ENCODE measurements at regions of chr7 and their contacts with region 1.

Region 1: GRCh38 chr7:106176414-106177299 is 64.5 kb upstream of the SYPL1 start:
- DNase-seq: peak; percentile 80 to 84
- ATAC-seq: peak; percentile 84 to 94 (median 91)
- H3K4me3 ChIP-seq: no peak overlapping the region
- H3K27ac ChIP-seq: peak overlapping the region in 6 of 10 donors; percentile 11 to 73 (median 38)
- H3K4me1 ChIP-seq: peaks cover 3 to 41% (median 18%) of the 10 kb centered on the region in 9 donors
- H3K27me3 ChIP-seq: peaks cover 0 to 10% (median 0%) of the 10 kb centered on the region in 7 donors
- CTCF ChIP-seq: peak; percentile 87 to 99 (median 95)

Region 2: DNA sequence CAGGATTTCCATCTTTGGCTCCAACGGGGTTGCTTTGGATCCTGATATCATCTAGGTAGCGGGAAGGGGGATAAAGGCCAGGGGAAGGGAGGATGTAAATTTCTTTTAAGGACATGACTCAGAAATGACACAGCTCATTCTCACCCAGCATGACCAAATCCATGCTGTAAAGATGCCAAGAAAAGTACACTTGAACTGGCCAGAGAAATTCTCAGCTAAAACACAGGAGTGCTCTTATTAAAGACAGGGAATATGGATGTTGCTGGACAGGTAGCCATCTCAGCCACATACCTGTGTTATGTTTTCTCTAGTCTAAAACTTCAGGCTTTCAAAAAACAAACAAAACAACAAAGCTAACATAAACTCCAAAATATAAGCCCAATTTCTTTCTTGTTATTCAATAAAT is 39.9 kb after region 1 on chr7:
- intact Hi-C with region 1: loop called in 3 of 10 experiments (anchors 2 to 5 kb)
- DNase-seq: peak in 1 of 2 donors; percentile 51
- ATAC-seq: peak; percentile 66 to 93 (median 92)
- H3K4me3 ChIP-seq: peak overlapping the region in 5 of 10 donors; percentile 1 to 34 (median 24)
- H3K27ac ChIP-seq: peak overlapping the region; percentile 72 to 93 (median 84)
- H3K4me1 ChIP-seq: peaks cover 18 to 39% (median 36%) of the 10 kb centered on the region in 9 donors
- H3K27me3 ChIP-seq: no peaks in the 10 kb centered on the region
- CTCF ChIP-seq: no peak

Region 3: DNA sequence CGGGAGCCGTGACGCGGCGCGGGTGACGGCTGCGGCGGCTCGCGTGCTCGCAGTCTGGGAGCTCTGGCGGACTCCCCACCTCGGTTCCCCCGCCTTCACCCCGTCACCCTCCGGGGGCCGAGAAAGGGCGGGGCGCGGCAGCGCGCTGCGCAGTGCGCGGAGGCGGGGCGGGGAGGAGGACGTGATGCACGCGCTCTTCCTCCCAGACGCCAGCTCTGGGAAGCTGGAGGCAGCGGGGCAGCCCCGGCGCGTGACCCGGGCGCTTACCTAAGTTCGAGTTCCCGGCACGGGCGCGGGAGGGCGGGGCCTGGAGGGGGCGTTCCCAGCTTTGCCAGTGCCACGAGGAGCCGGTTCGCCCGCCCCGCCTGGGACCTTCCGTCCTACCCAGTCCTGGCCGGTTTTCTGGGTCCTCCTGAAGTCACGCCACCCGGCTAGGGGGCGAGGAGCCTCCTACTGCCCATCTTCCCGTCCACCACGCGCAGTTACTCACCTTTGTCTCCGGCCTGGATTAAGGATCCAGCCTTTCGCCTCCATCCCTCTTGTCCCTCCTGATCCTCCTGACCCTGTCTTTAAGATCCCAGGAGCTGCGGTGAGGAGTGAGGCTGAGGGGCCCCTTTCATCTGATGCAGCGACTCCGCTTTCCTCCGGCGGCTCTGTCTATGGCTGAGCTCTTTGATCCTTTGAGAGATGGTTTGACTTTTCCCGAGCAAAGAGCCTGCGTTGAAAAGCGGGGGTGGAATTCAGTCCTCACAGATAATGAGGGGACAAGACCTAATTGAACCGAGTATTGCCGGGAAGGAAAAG is 108.6 kb after region 1 on chr7:
- intact Hi-C with region 1: loop called in 6 of 10 experiments (anchors 2 to 5 kb)
- DNase-seq: peak; percentile 96 to 97
- ATAC-seq: peak; percentile 95 to 99 (median 96)
- H3K4me3 ChIP-seq: peak overlapping the region; percentile 60 to 80 (median 75)
- H3K27ac ChIP-seq: peak overlapping the region; percentile 86 to 99 (median 96)
- H3K4me1 ChIP-seq: peaks cover 0 to 44% (median 25%) of the 10 kb centered on the region in 9 donors
- H3K27me3 ChIP-seq: no peaks in the 10 kb centered on the region
- CTCF ChIP-seq: peak in 1 of 9 donors; percentile 24

Region 4: GRCh38 chr7:106371629-106372028 is 195.0 kb after region 1 on chr7:
- intact Hi-C with region 1: loop called in 1 of 10 experiments (anchors 10 kb)
- DNase-seq: no peak
- ATAC-seq: peak in 3 of 8 donors; percentile 13 to 50 (median 48)
- H3K4me3 ChIP-seq: no peak overlapping the region
- H3K27ac ChIP-seq: peak overlapping the region in 1 of 10 donors; percentile 46
- H3K4me1 ChIP-seq: peaks cover 0 to 13% (median 0%) of the 10 kb centered on the region in 9 donors
- H3K27me3 ChIP-seq: no peaks in the 10 kb centered on the region
- CTCF ChIP-seq: no peak

Region 5: DNA sequence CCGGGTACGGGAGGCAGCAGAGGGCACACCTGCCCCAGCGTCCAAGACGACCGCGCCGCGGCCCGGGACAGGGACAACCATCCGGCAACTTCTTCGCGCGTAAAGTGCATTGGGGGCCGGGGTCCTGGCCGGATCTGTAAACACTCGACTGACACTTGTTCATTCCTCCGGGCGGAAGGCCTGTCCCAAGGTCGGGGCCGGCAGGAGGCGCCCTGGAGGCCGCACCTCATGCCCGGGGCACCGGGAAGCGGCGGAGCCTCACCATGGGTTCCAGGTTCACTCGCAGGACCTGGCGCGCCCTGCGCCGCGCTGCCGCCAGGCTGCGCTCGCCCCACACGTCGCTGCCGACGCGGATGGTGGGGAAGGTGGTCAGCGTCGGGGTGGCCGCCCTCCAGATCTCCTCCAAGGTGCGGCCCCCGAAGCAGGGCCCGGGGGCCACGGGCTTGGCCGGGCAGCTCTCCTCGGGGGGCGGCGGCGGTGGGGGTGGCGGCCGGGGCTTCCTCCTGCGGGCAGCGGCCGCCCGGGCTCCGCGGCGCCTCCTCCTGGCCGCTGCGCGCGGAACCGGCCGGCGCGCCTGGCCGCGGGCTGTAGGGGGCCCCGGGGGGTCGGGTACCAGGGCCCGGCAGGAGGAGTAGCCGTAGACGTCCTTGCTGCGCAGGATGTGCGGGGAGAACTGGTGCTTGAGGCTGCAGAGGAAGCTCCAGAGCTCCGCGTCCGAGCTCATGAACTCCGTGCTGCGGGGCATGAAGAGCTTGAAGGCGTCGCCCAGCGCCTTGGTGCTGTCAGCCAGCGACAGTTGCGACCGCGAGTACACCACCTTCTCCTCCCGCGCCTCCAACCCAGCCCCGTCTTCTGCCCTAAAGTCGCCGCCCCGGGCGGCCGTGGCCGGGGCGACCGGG is 483.6 kb after region 1 on chr7:
- intact Hi-C with region 1: loop called in 3 of 10 experiments (anchors 2 to 5 kb)
- DNase-seq: peak; percentile 61 to 78
- ATAC-seq: peak; percentile 59 to 80 (median 68)
- H3K4me3 ChIP-seq: peak overlapping the region; percentile 69 to 95 (median 82)
- H3K27ac ChIP-seq: peak overlapping the region; percentile 86 to 98 (median 94)
- H3K4me1 ChIP-seq: peaks cover 0 to 35% (median 27%) of the 10 kb centered on the region in 9 donors
- H3K27me3 ChIP-seq: no peaks in the 10 kb centered on the region
- CTCF ChIP-seq: peak; percentile 61 to 84 (median 72)

Region 6: DNA sequence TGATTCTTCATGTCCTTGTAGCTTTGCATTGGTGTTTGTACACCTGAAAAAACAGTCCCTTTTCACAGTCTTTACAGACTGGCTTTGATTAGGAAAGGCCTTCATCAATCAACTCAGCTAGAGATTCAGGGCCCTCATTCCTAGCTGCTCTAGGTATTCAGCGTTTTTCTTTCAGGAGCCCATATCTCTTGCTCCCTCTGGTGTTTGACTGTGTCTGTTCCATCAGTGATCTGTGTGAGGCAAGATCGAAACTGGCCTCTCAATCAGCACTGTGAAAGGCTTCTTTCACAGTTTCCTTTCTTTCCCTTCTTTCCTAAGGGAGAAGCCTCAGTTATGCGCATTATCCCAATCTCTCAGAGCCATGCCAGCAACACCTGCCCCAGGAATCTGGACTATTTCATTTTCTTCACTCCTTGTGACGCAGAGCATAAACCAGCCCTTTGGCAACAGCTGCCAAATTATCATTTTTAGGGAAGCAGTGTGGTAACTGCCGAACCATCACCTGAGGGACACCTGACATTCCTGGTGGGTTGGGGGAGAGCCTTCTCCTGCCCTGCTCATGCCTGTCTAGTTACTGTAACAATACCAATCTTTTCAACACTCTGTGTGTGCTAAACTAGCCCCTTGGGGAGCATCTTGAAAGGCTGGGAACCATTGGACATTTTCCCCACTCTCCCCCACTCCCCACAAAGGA is 560.0 kb after region 1 on chr7:
- intact Hi-C with region 1: loop called in 9 of 10 experiments (anchors 2 to 10 kb)
- DNase-seq: peak in 1 of 2 donors; percentile 46
- ATAC-seq: peak in 6 of 8 donors; percentile 78 to 89 (median 84)
- H3K4me3 ChIP-seq: no peak overlapping the region
- H3K27ac ChIP-seq: no peak overlapping the region
- H3K4me1 ChIP-seq: peaks cover 0 to 18% (median 6%) of the 10 kb centered on the region in 9 donors
- H3K27me3 ChIP-seq: peaks cover 0 to under 1% (median 0%) of the 10 kb centered on the region in 7 donors
- CTCF ChIP-seq: peak; percentile 20 to 81 (median 64)